Activated T-helper 1 cell treated with anti-CD3 and anti-CD28 coated beads, Interleukin-12 subunit alpha, Interleukin-12 subunit beta, Interleukin-2, Interleukin-4 antibody, amounts not matched to agents 30 ng/mL and 10 ng/mL and 1 ng/mL, durations not matched to agents 14 hours and 24 hours and 36 hours (primary cell): ENCODE measurements at regions of chr3 and their contacts with region 1.

Region 1: GRCh38 chr3:101861212-101861788 is 12.0 kb downstream of the NFKBIZ start:
- DNase-seq: no peak
- H3K4me3 Mint-ChIP-seq: no peak overlapping the region
- H3K27ac Mint-ChIP-seq: peak overlapping the region; percentile 34
- H3K4me1 Mint-ChIP-seq: peaks cover 67% of the 10 kb centered on the region
- H3K27me3 Mint-ChIP-seq: no peaks in the 10 kb centered on the region

Region 2: DNA sequence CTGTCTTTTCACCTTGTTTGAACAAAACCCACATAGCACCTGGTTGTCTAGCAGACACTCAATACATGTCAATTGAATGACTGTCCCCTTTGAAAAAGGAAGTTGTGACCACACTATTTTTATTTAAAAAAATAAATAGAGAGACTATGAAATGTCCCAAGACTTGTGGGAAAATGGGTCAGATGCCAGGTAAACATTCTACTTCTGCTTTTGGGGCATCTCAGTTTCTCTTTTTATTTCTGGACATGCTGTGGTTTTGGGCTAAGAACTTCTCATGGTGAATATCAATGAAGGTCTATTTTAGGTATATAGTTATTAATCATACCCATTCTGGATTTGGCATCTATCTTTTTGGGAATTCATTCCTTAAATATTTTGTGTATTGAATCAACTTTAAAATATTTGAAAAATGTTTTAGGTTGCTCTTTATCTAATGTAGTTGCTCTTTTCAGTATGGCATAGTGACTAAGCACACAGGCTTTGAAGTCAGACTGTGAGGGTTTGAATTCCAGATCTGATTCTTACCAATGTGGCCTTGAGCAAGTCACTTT is 1364.5 kb before region 1 on chr3:
- intact Hi-C with region 1: no loop called
- DNase-seq: no peak
- H3K4me3 Mint-ChIP-seq: no peak overlapping the region
- H3K27ac Mint-ChIP-seq: no peak overlapping the region
- H3K4me1 Mint-ChIP-seq: peaks cover 13% of the 10 kb centered on the region
- H3K27me3 Mint-ChIP-seq: peaks cover 10% of the 10 kb centered on the region

Region 3: GRCh38 chr3:101902041-101902440 is 40.7 kb after region 1 on chr3:
- intact Hi-C with region 1: loop called (anchors 1 kb)
- DNase-seq: no peak
- H3K4me3 Mint-ChIP-seq: no peak overlapping the region
- H3K27ac Mint-ChIP-seq: peak overlapping the region; percentile 38
- H3K4me1 Mint-ChIP-seq: peaks cover 18% of the 10 kb centered on the region
- H3K27me3 Mint-ChIP-seq: no peaks in the 10 kb centered on the region

Region 4: DNA sequence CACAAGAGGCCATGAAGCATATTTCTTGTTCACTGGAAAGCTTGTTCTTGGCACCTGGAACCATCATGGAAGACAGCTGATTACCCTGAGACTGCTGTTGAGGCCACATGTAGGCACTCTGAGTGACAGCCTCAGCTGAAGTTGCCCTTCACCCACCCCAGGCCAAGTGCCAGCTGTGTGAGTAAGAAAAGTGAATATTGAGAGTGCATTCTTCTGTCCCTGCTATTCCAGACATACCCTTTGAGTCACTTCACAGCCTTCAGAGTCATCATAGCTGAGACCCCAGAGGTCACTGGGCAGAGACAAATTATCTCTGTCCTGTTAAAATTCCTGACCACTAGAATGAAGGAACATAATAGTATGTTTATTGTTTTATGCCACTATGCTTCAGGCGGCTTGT is 67.6 kb after region 1 on chr3:
- intact Hi-C with region 1: loop called (anchors 2 kb)
- DNase-seq: no peak
- H3K4me3 Mint-ChIP-seq: no peak overlapping the region
- H3K27ac Mint-ChIP-seq: no peak overlapping the region
- H3K4me1 Mint-ChIP-seq: peaks cover 35% of the 10 kb centered on the region
- H3K27me3 Mint-ChIP-seq: peaks cover 10% of the 10 kb centered on the region